MCF 10A (cell line): ENCODE measurements at regions of chr9 and their contacts with region 1.

Region 1: GRCh38 chr9:5886114-5886939 is 4.4 kb upstream of the MLANA start:
- DNase-seq: peak; percentile 78
- H3K4me3 Mint-ChIP-seq: no peak overlapping the region
- H3K27ac Mint-ChIP-seq: no peak overlapping the region
- H3K4me1 Mint-ChIP-seq: peaks cover 7% of the 10 kb centered on the region
- H3K27me3 Mint-ChIP-seq: peaks cover 16% of the 10 kb centered on the region
- CTCF ChIP-seq: peak; percentile 93

Region 2: DNA sequence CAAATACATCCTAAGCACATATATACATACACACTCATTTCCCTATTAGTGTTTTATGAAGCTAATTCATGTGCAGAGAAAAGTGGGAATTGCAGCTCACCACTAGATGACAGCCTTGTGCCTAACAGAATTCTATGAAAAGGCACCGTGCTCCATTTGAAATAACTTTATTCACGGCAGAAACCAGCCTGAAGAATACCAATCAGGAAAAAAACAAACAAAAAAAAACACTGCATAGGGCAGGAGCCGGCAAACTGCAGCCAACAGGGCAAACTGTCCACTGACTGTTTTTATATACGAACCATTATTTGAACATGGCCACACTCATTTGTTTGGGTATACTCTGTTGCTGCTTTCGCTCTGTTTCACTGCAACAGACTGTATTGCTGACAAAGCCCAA is 87.0 kb before region 1 on chr9:
- CTCF ChIA-PET with region 1: interaction called, 33 read pairs
- POLR2A ChIA-PET with region 1: no interaction called
- intact Hi-C with region 1: loop called (anchors 1 kb)
- DNase-seq: peak; percentile 55
- H3K4me3 Mint-ChIP-seq: no peak overlapping the region
- H3K27ac Mint-ChIP-seq: no peak overlapping the region
- H3K4me1 Mint-ChIP-seq: peaks cover 6% of the 10 kb centered on the region
- H3K27me3 Mint-ChIP-seq: no peaks in the 10 kb centered on the region
- CTCF ChIP-seq: peak; percentile 70

Region 3: DNA sequence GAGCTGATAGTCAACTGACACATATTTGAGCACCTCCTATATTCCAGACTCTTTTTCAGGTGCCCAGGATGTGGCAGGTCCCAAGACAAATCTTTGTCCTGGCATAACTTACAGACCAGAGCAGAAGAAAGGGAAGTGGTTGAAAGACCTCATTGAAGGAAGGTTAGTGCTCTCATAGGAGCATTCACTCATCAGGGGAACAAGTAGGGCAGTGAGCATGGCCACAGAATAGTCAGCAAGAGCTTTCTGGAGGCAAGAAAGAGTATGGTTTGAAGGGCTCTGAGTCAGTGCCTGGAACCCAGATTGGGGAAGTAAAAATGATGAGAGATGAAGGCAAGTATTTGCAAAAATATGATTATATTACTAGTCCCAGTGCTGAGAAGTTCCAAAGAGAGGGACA is 28.4 kb before region 1 on chr9:
- CTCF ChIA-PET with region 1: interaction called, 11 read pairs
- POLR2A ChIA-PET with region 1: interaction called, 3 read pairs
- intact Hi-C with region 1: no loop called
- DNase-seq: no peak
- H3K4me3 Mint-ChIP-seq: no peak overlapping the region
- H3K27ac Mint-ChIP-seq: no peak overlapping the region
- H3K4me1 Mint-ChIP-seq: no peaks in the 10 kb centered on the region
- H3K27me3 Mint-ChIP-seq: no peaks in the 10 kb centered on the region
- CTCF ChIP-seq: no peak

Region 4: DNA sequence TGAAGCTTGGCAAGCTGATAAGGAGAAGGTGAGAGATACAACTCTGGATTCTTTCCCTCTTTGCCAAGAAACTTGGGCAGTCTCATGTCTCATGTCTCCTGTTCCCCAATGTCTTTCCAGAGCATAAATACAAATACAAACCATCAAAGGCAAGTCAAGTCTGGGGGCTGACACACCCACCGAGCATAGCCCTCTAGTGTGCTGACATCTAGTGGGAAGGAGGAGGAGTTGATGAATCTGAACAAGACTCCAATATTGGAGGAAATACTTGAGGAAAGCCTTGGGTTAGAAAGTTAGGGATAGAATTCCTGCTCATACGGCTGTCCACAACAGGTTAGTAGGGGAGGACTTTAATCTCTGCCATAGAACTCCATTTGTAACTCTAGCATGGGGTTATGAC is 13.0 kb after region 1 on chr9:
- CTCF ChIA-PET with region 1: interaction called, 24 read pairs
- POLR2A ChIA-PET with region 1: interaction called, 5 read pairs
- intact Hi-C with region 1: no loop called
- DNase-seq: no peak
- H3K4me3 Mint-ChIP-seq: no peak overlapping the region
- H3K27ac Mint-ChIP-seq: no peak overlapping the region
- H3K4me1 Mint-ChIP-seq: no peaks in the 10 kb centered on the region
- H3K27me3 Mint-ChIP-seq: no peaks in the 10 kb centered on the region
- CTCF ChIP-seq: peak; percentile 6

Region 5: GRCh38 chr9:5976674-5977397 is 90.5 kb after region 1 on chr9:
- CTCF ChIA-PET with region 1: interaction called, 41 read pairs
- POLR2A ChIA-PET with region 1: no interaction called
- intact Hi-C with region 1: loop called (anchors 1 kb)
- DNase-seq: peak; percentile 20
- H3K4me3 Mint-ChIP-seq: peak overlapping the region; percentile 18
- H3K27ac Mint-ChIP-seq: peak overlapping the region; percentile 74
- H3K4me1 Mint-ChIP-seq: peaks cover 24% of the 10 kb centered on the region
- H3K27me3 Mint-ChIP-seq: no peaks in the 10 kb centered on the region
- CTCF ChIP-seq: no peak

Region 6: GRCh38 chr9:6055213-6055612 is 168.9 kb after region 1 on chr9:
- CTCF ChIA-PET with region 1: interaction called, 76 read pairs
- POLR2A ChIA-PET with region 1: interaction called, 8 read pairs
- intact Hi-C with region 1: loop called (anchors 1 kb)
- DNase-seq: peak; percentile 93
- H3K4me3 Mint-ChIP-seq: no peak overlapping the region
- H3K27ac Mint-ChIP-seq: no peak overlapping the region
- H3K4me1 Mint-ChIP-seq: peaks cover 11% of the 10 kb centered on the region
- H3K27me3 Mint-ChIP-seq: no peaks in the 10 kb centered on the region
- CTCF ChIP-seq: peak; percentile 72